ENCODE measurements at regions of chr2 and their contacts with region 1.

Region 1: DNA sequence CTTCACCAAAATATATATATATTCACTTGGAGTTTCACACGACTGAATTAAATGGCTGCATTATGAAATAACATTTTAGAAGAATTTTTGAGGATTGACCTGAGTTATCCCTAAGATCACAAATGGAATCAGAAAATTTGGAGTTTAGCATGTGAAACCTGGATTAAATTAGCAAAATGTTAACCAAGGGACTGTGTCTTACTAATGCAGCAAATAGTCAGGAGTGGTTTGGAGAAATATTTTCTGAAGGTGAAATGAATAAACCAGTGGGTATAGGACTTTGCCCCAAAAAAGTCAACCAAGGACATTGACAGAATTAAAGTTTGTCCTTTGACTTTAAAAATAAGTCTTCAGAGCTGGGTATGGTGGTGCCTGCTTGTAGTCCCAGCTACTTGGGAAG is 111.2 kb downstream of the PRPF40A start:
- DNase-seq: no peak
- ATAC-seq: no peak
- H3K4me3 ChIP-seq: no peak overlapping the region
- H3K27ac ChIP-seq: no peak overlapping the region
- H3K4me1 ChIP-seq: no peaks in the 10 kb centered on the region
- H3K27me3 ChIP-seq: no peaks in the 10 kb centered on the region
- CTCF ChIP-seq: no peak
- POLR2A ChIP-seq: no peak
- RAD21 ChIP-seq: no peak

Region 2: DNA sequence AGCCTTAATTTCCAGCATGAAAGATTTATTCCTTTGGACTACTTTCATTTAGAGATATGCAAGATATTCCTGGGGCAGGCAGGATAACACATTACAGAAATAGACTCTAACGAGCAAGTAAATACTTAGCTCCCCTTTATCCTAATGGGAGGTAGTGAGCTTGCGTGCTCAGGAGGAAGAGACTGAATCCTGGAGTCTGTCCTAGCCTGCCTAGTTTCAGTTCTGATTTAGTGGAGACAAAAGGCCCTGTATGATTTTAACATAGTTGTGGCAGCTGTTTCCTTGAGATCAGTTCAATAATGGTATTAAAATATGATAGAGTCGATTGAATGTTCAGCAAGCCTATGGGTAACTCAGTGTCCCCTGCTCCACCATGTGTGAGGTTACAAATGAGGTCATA is 161.6 kb before region 1 on chr2:
- CTCF ChIA-PET with region 1: no interaction called
- POLR2A ChIA-PET with region 1: interaction called, 10 read pairs
- dilution Hi-C with region 1: no loop called
- in situ Hi-C with region 1: no loop called
- intact Hi-C with region 1: no loop called
- DNase-seq: no peak
- ATAC-seq: no peak
- H3K4me3 ChIP-seq: no peak overlapping the region
- H3K27ac ChIP-seq: no peak overlapping the region
- H3K4me1 ChIP-seq: 0 out of 2 replicates have a peak, but pooled peaks cover 2% of the 10 kb centered on the region
- H3K27me3 ChIP-seq: no peaks in the 10 kb centered on the region
- CTCF ChIP-seq: no peak
- POLR2A ChIP-seq: no peak
- RAD21 ChIP-seq: no peak

Region 3: GRCh38 chr2:152525277-152525838 is 80.7 kb before region 1 on chr2:
- CTCF ChIA-PET with region 1: no interaction called
- POLR2A ChIA-PET with region 1: interaction called, 21 read pairs
- dilution Hi-C with region 1: no loop called
- in situ Hi-C with region 1: no loop called
- intact Hi-C with region 1: no loop called
- DNase-seq: peak; percentile 64
- ATAC-seq: peak; percentile 74
- H3K4me3 ChIP-seq: no peak overlapping the region
- H3K27ac ChIP-seq: no peak overlapping the region
- H3K4me1 ChIP-seq: peaks cover 12% of the 10 kb centered on the region
- H3K27me3 ChIP-seq: no peaks in the 10 kb centered on the region
- CTCF ChIP-seq: no peak
- POLR2A ChIP-seq: no peak
- RAD21 ChIP-seq: no peak

Region 4: GRCh38 chr2:152730591-152731303 is 124.7 kb after region 1 on chr2:
- CTCF ChIA-PET with region 1: no interaction called
- POLR2A ChIA-PET with region 1: no interaction called
- dilution Hi-C with region 1: no loop called
- in situ Hi-C with region 1: no loop called
- intact Hi-C with region 1: no loop called
- DNase-seq: no peak
- ATAC-seq: peak; percentile 44
- H3K4me3 ChIP-seq: no peak overlapping the region
- H3K27ac ChIP-seq: no peak overlapping the region
- H3K4me1 ChIP-seq: no peaks in the 10 kb centered on the region; the same call in 1 of the 2 replicates
- H3K27me3 ChIP-seq: no peaks in the 10 kb centered on the region
- CTCF ChIP-seq: no peak
- POLR2A ChIP-seq: no peak
- RAD21 ChIP-seq: no peak